Activated B cell treated with CpG ODN at 0.5 μM for 24 hours (primary cell): ENCODE measurements at regions of chr9 and their contacts with region 1.

Region 1: DNA sequence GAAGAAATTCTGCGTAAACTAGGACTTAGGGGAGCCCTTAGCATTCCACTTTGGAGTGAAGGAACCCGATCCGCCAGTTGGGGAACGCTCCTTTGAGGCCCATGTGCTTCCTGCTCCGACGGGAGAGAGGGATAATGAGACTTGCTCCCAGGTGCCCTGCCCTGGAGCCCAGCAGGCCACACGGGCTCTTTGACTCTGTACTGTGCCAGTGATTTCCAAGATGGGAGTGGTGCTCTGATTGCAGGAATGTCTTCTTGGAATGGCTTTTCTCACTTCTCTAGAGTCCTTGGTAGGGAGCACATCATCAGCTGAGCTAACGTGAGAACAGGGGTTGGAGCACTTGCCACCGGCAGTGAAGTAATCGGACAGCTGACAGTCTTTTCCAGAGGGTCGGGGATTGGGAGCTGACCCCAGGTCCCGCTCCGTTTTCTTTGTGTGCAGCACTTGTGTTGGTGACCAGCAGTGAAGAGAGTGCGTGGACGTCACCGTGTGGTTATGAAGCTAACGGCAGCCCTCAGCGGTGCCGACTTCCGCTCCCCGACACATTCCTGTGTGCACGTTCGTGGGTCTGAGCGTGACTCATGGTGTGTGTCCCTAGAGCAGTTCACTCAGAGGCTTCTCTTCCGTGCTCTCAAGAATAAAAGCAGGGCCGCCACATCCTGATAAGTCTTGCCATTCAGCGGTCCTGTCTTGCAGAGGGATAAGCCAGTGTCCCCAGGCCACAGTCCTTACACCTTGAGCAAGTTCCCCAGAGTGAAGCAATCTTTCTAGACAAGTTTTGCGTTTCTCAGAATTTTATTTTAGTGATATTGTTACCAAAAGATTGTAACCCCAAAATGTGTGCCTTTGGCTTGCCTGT is 25.6 kb downstream of the ABL1 start:
- DNase-seq: no peak
- ATAC-seq: no peak
- H3K4me3 Mint-ChIP-seq: no peak overlapping the region
- H3K27ac Mint-ChIP-seq: no peak overlapping the region
- H3K4me1 Mint-ChIP-seq: no peaks in the 10 kb centered on the region
- H3K27me3 Mint-ChIP-seq: no peaks in the 10 kb centered on the region
- CTCF ChIP-seq: no peak

Region 2: DNA sequence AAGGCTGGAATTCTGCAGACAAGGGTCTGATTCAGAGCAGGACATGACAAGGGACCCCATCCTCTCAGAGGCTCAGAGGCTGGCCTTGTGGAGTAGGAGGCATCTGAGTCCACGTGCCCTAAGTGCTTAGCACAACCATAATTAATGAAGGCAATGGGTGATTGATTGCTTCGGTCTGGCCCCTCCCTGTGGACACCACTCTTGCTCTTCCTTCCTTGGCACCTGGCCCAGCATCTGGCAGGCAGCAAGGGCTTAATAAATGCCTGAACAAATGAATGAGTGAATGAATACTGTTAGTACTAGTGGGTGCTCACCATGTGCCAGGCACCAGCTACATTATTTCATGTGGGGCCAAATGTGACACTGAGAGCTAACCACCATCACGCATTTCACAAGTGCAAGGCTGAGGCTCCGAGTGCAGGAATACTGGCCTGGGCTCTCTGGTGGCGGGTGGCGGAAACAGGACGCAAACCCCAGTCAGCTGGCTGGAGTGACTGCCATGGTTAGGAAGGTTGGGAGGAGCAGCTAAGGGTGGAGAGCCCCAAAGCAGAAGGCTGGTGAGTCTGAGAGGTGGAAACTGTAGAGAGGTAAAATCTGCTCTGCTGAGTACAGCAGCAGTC is 362.3 kb before region 1 on chr9:
- CTCF ChIA-PET with region 1: no interaction called
- POLR2A ChIA-PET with region 1: no interaction called
- intact Hi-C with region 1: no loop called
- DNase-seq: no peak
- ATAC-seq: no peak
- H3K4me3 Mint-ChIP-seq: no peak overlapping the region
- H3K27ac Mint-ChIP-seq: no peak overlapping the region
- H3K4me1 Mint-ChIP-seq: no peaks in the 10 kb centered on the region
- H3K27me3 Mint-ChIP-seq: peaks cover 8% of the 10 kb centered on the region
- CTCF ChIP-seq: no peak

Region 3: GRCh38 chr9:130701056-130702022 is 159.3 kb before region 1 on chr9:
- CTCF ChIA-PET with region 1: interaction called, 17 read pairs
- POLR2A ChIA-PET with region 1: no interaction called
- intact Hi-C with region 1: no loop called
- DNase-seq: peak; percentile 51
- ATAC-seq: peak; percentile 84
- H3K4me3 Mint-ChIP-seq: no peak overlapping the region
- H3K27ac Mint-ChIP-seq: no peak overlapping the region
- H3K4me1 Mint-ChIP-seq: peaks cover 19% of the 10 kb centered on the region
- H3K27me3 Mint-ChIP-seq: no peaks in the 10 kb centered on the region
- CTCF ChIP-seq: no peak